Stomach (tissue), 19 donors: ENCODE measurements at regions of chr12 and their contacts with region 1.

Region 1: GRCh38 chr12:101564912-101565311 is 29.9 kb upstream of the MYBPC1 start:
- DNase-seq: no peak
- H3K4me3 ChIP-seq: no peak overlapping the region
- H3K27ac ChIP-seq: no peak overlapping the region
- H3K4me1 ChIP-seq: peaks cover 0 to 6% (median under 1%) of the 10 kb centered on the region in 4 donors
- H3K27me3 ChIP-seq: no peaks in the 10 kb centered on the region
- CTCF ChIP-seq: no peak
- EP300 ChIP-seq: no peak
- POLR2A ChIP-seq: no peak

Region 2: GRCh38 chr12:101759396-101760047 is 194.6 kb after region 1 on chr12:
- intact Hi-C with region 1: loop called (anchors 10 kb)
- DNase-seq: peak in 1 of 2 donors; percentile 52
- H3K4me3 ChIP-seq: no peak overlapping the region
- H3K27ac ChIP-seq: no peak overlapping the region
- H3K4me1 ChIP-seq: peaks cover 0 to 5% (median 0%) of the 10 kb centered on the region in 4 donors
- H3K27me3 ChIP-seq: no peaks in the 10 kb centered on the region
- CTCF ChIP-seq: peak in 5 of 7 experiments; percentile 56 to 74 (median 71)
- EP300 ChIP-seq: no peak
- POLR2A ChIP-seq: no peak